ENCODE measurements at regions of chr17 and their contacts with region 1.

Region 1: DNA sequence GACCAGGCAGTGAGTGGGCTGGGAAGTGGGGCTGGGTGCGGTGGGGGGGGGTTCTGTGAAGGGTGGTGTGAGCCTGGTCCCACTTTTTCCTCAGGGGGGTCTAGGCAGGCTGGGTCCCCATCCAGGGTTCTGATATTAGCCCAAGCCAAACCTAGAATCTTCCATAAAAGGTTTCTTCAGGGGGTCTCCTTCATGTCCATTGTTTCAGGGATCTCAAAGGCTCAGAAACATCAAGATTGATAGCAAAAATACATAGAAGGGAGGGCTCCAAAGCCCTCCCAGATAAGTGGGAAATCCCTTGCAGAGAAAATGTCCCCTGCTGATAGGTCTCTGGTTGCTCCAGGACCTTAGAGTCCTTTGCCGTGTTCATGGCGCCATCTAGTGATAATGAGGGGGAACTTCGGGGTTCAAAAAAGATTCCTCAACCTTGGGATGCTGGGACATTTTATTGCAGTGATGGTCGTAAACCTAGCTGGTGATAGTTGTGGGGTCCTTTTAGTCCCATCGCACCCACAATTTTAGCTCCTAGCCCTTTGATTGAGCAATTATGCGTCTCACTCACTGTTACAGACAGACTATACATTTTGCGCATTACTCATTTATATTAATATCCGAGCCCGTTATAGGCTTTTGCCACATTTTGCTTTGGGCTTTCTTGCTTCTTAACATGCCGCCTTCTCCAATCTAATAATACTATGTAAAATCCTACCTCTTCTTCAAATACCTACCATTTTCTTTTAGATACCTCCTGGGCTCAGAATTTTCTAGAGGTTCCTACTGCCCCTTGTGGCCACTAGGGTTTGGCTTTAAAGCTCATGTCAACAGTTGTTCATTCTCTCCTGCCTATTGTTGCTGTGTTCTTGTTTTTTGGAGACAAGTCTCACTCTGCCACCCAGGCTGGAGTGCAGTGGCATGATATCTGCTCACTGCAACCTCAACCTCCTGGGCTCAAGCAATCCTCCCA is 35.1 kb downstream of the IGF2BP1 start:
- DNase-seq: peak; percentile 60
- H3K4me3 ChIP-seq: no peak overlapping the region
- H3K27ac ChIP-seq: no peak overlapping the region
- H3K27me3 ChIP-seq: no peaks in the 10 kb centered on the region
- CTCF ChIP-seq: peak; percentile 93

Region 2: GRCh38 chr17:48804925-48805411 is 227.3 kb before region 1 on chr17:
- CTCF ChIA-PET with region 1: interaction called, 11 read pairs
- POLR2A ChIA-PET with region 1: no interaction called
- DNase-seq: no peak
- H3K4me3 ChIP-seq: no peak overlapping the region
- H3K27ac ChIP-seq: no peak overlapping the region
- H3K27me3 ChIP-seq: peaks cover 12% of the 10 kb centered on the region
- CTCF ChIP-seq: peak; percentile 95

Region 3: GRCh38 chr17:48908047-48908843 is 124.0 kb before region 1 on chr17 and contains the start of gene UBE2Z:
- CTCF ChIA-PET with region 1: interaction called, 21 read pairs
- POLR2A ChIA-PET with region 1: interaction called, 4 read pairs
- DNase-seq: peak; percentile 85
- H3K4me3 ChIP-seq: peak within 1 kb of the TSS; percentile 84
- H3K27ac ChIP-seq: peak within 1 kb of the TSS; percentile 89
- H3K27me3 ChIP-seq: no peaks in the 10 kb centered on the region
- CTCF ChIP-seq: no peak
- polyA plus RNA-seq, gene UBE2Z: 176 and 178 TPM in 2 replicates

Region 4: DNA sequence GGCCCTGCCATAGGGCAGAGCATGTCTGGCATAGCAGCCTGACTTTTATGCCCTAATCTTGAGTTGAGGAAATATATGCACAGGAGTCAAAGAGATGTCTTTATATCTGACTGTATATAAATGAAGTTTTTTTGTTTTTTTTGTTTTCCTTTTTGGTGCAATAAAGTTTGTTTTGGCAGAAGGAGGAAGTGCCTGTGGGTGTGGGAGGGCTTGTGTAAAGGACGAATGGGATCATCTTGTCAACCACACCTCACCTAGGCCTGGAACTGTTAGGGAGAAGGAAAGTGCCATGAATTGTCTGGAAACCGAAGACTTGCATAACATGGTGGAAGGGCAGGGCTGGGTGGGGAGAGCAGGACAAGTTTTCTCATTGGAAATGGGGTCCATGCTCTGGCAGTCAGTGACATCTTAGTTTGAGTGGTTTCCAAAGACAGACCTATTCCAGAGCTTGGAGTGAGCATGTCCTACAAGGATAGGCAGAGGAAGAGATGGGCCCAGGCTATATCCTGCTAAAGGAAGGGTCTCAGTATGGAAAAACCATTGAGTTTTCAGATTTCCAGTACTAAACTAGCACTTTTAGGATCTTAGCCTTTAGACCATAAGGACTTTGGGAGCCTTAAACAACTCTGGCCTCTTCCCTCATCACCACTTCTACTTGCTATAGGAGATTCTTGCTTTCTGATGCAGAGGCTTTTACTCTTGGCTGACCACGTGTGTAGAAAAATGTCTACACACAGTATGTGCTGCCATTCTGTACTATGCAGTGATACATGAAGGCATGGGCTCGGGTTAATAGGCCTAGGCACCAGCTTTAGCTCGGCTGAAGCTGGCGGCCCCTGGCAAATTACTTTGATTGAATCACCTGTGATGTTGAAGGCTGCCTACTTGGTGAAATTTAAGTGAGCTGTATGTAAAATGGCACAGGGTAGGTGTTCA is 103.1 kb before region 1 on chr17:
- CTCF ChIA-PET with region 1: interaction called, 17 read pairs
- POLR2A ChIA-PET with region 1: no interaction called
- DNase-seq: no peak
- H3K4me3 ChIP-seq: no peak overlapping the region
- H3K27ac ChIP-seq: no peak overlapping the region
- H3K27me3 ChIP-seq: no peaks in the 10 kb centered on the region
- CTCF ChIP-seq: no peak

Region 5: DNA sequence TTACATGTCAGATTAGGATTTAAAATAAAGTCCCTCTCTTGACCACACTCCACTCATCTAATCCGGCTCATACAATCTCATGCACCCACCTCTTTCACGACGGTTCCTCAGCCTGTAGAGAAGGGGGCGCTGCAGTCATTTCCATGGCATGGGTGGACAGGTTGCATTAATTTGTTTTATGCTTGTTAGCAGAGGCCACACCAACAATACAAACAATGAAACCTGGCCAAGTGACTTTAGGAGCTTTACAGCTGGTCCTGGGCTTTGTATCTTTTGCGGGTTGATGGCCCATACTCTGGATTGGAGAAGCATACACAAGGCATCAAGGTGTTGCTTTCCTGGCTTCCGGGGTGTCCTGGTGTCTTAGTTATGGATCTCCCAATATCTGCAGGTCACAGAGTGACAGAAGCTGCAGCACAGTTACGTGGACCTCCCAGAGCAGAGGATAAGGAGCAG is 77.9 kb before region 1 on chr17:
- CTCF ChIA-PET with region 1: interaction called, 26 read pairs
- POLR2A ChIA-PET with region 1: no interaction called
- DNase-seq: no peak
- H3K4me3 ChIP-seq: no peak overlapping the region
- H3K27ac ChIP-seq: no peak overlapping the region
- H3K27me3 ChIP-seq: no peaks in the 10 kb centered on the region
- CTCF ChIP-seq: peak; percentile 67

Region 6: GRCh38 chr17:49016788-49017463 is 15.3 kb before region 1 on chr17:
- CTCF ChIA-PET with region 1: interaction called, 51 read pairs
- POLR2A ChIA-PET with region 1: no interaction called
- DNase-seq: peak; percentile 44
- H3K4me3 ChIP-seq: no peak overlapping the region
- H3K27ac ChIP-seq: peak overlapping the region; percentile 47
- H3K27me3 ChIP-seq: no peaks in the 10 kb centered on the region
- CTCF ChIP-seq: no peak

Region 7: GRCh38 chr17:49125449-49125848 is 93.2 kb after region 1 on chr17:
- CTCF ChIA-PET with region 1: no interaction called
- POLR2A ChIA-PET with region 1: no interaction called
- DNase-seq: no peak
- H3K4me3 ChIP-seq: no peak overlapping the region
- H3K27ac ChIP-seq: no peak overlapping the region
- H3K27me3 ChIP-seq: peaks cover 8% of the 10 kb centered on the region
- CTCF ChIP-seq: no peak

Region 8: GRCh38 chr17:49191917-49192741 is 159.9 kb after region 1 on chr17:
- CTCF ChIA-PET with region 1: no interaction called
- POLR2A ChIA-PET with region 1: no interaction called
- DNase-seq: peak; percentile 45
- H3K4me3 ChIP-seq: peak overlapping the region; percentile 89
- H3K27ac ChIP-seq: peak overlapping the region; percentile 98
- H3K27me3 ChIP-seq: no peaks in the 10 kb centered on the region
- CTCF ChIP-seq: peak; percentile 38

Region 9: GRCh38 chr17:49443862-49444261 is 411.6 kb after region 1 on chr17:
- CTCF ChIA-PET with region 1: no interaction called
- POLR2A ChIA-PET with region 1: no interaction called
- DNase-seq: no peak
- H3K4me3 ChIP-seq: no peak overlapping the region
- H3K27ac ChIP-seq: no peak overlapping the region
- H3K27me3 ChIP-seq: peaks cover 48% of the 10 kb centered on the region
- CTCF ChIP-seq: no peak